ENCODE measurements at regions of chr2 and their contacts with region 1.

Region 1: GRCh38 chr2:131154071-131154531 is 49.0 kb downstream of the PLEKHB2 start:
- DNase-seq: peak; percentile 32 to 80 (median 63)
- ATAC-seq: peak; percentile 84
- H3K4me3 ChIP-seq: no peak overlapping the region
- H3K4me3 Mint-ChIP-seq: no peak overlapping the region
- H3K27ac ChIP-seq: no peak overlapping the region
- H3K27ac Mint-ChIP-seq: no peak overlapping the region
- H3K4me1 ChIP-seq: peaks cover 15% of the 10 kb centered on the region
- H3K4me1 Mint-ChIP-seq: peaks cover 19% of the 10 kb centered on the region
- H3K27me3 ChIP-seq: no peaks in the 10 kb centered on the region
- H3K27me3 Mint-ChIP-seq: no peaks in the 10 kb centered on the region
- CTCF ChIP-seq: peak; percentile 64

Region 2: GRCh38 chr2:131168538-131168937 is 14.4 kb after region 1 on chr2:
- CTCF ChIA-PET with region 1: no interaction called
- POLR2A ChIA-PET with region 1: no interaction called
- intact Hi-C with region 1: no loop called
- DNase-seq: no peak
- ATAC-seq: no peak
- H3K4me3 ChIP-seq: no peak overlapping the region
- H3K4me3 Mint-ChIP-seq: no peak overlapping the region
- H3K27ac ChIP-seq: no peak overlapping the region
- H3K27ac Mint-ChIP-seq: no peak overlapping the region
- H3K4me1 ChIP-seq: no peaks in the 10 kb centered on the region
- H3K4me1 Mint-ChIP-seq: no peaks in the 10 kb centered on the region
- H3K27me3 ChIP-seq: no peaks in the 10 kb centered on the region
- H3K27me3 Mint-ChIP-seq: peaks cover 8% of the 10 kb centered on the region
- CTCF ChIP-seq: no peak

Region 3: GRCh38 chr2:131413148-131413747 is 259.1 kb after region 1 on chr2:
- CTCF ChIA-PET with region 1: interaction called, 4 read pairs
- POLR2A ChIA-PET with region 1: no interaction called
- intact Hi-C with region 1: loop called (anchors 1 to 2 kb)
- DNase-seq: peak in 2 of 9 experiments; percentile 53 to 63
- ATAC-seq: no peak
- H3K4me3 ChIP-seq: no peak overlapping the region
- H3K4me3 Mint-ChIP-seq: no peak overlapping the region
- H3K27ac ChIP-seq: no peak overlapping the region
- H3K27ac Mint-ChIP-seq: no peak overlapping the region
- H3K4me1 ChIP-seq: no peaks in the 10 kb centered on the region
- H3K4me1 Mint-ChIP-seq: no peaks in the 10 kb centered on the region
- H3K27me3 ChIP-seq: no peaks in the 10 kb centered on the region
- H3K27me3 Mint-ChIP-seq: peaks cover 33% of the 10 kb centered on the region
- CTCF ChIP-seq: peak; percentile 94

Region 4: DNA sequence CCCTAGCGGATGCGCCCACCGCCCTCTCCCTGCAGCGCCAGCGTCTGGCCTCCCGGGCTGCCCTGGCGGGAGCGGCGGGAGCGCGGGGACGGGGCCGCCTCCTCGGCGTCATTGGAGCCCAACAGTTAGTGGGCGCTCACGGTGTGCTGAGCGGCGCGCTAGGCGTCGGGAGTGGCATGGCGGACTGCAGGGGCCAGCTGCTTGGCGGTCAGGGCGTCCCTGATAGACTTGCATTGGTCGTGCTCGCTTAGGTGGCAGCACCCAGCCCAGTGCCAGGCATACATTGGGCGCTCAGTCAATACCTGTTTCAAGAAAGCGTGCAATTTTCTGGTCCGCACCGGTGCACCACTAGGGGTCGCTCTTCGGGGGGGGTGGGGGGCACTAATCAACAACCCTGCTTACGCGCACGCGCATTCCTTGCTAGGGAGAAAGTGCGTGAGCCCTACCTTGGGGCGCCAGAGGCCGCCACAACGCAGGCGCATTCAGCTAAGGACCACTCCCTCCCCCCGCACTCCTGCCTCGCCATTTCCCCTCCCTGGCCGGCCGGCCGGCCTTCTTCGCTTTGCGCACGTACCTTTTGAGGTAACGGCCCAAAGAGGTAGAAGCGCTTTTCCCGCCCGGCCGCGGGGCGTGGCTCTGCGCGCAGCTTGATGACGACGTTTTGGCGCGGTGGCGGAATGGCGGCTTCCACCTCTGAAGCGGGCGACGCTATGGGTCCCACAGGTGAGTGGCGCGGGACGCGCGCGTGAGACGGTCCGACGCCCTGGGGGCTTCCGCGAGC is 338.5 kb after region 1 on chr2:
- CTCF ChIA-PET with region 1: no interaction called
- POLR2A ChIA-PET with region 1: no interaction called
- intact Hi-C with region 1: loop called in 1 of 2 experiments (anchors 10 kb)
- DNase-seq: peak; percentile 86 to 98 (median 93)
- ATAC-seq: peak; percentile 73
- H3K4me3 ChIP-seq: peak overlapping the region; percentile 86 to 87
- H3K4me3 Mint-ChIP-seq: peak overlapping the region; percentile 95
- H3K27ac ChIP-seq: peak overlapping the region; percentile 95 to 97
- H3K27ac Mint-ChIP-seq: peak overlapping the region; percentile 98
- H3K4me1 ChIP-seq: peaks cover 19% of the 10 kb centered on the region
- H3K4me1 Mint-ChIP-seq: peaks cover 49% of the 10 kb centered on the region
- H3K27me3 ChIP-seq: no peaks in the 10 kb centered on the region
- H3K27me3 Mint-ChIP-seq: no peaks in the 10 kb centered on the region
- CTCF ChIP-seq: peak; percentile 88

Region 5: GRCh38 chr2:131673392-131674173 is 519.5 kb after region 1 on chr2:
- CTCF ChIA-PET with region 1: interaction called, 15 read pairs
- POLR2A ChIA-PET with region 1: no interaction called
- intact Hi-C with region 1: loop called in 1 of 2 experiments (anchors 1 kb)
- DNase-seq: peak; percentile 28 to 75 (median 56)
- ATAC-seq: peak; percentile 54
- H3K4me3 ChIP-seq: peak overlapping the region; percentile 39 to 50
- H3K4me3 Mint-ChIP-seq: peak overlapping the region; percentile 67
- H3K27ac ChIP-seq: no peak overlapping the region
- H3K27ac Mint-ChIP-seq: no peak overlapping the region
- H3K4me1 ChIP-seq: peaks cover 14% of the 10 kb centered on the region
- H3K4me1 Mint-ChIP-seq: peaks cover 4% of the 10 kb centered on the region
- H3K27me3 ChIP-seq: peaks cover 0 to 5% of the 10 kb centered on the region in 2 experiments
- H3K27me3 Mint-ChIP-seq: peaks cover 33% of the 10 kb centered on the region
- CTCF ChIP-seq: peak; percentile 81

Region 6: DNA sequence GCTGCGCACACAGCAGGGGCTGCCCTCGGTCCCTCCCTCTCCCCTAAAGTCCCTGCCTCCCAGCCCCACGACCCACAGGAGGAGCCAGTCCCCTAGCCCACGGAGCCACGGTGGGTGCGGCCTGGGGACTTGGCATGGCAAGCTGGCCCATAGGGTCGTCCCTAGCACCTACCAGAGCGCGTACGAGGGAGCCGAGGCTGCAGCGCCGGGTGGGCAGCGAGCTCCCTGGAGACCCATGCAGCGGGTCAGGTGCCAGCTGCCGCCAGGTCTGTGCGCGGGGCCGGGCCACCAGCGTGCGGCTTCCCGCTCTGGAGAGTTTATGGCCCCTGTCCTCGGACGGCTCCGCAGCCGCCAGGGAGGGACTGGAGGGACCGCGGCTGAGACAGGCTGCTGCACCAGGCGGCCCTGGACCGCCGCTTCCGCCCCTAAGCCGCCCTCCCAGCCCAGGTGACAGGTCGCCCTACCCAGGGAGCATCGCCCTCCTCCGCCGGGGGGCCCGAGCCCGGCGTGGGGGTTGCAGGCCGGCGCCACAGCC is 647.2 kb after region 1 on chr2:
- CTCF ChIA-PET with region 1: interaction called, 3 read pairs
- POLR2A ChIA-PET with region 1: no interaction called
- intact Hi-C with region 1: loop called in 1 of 2 experiments (anchors 5 kb)
- DNase-seq: peak in 2 of 9 experiments; percentile 12 to 14
- ATAC-seq: no peak
- H3K4me3 ChIP-seq: no peak overlapping the region
- H3K4me3 Mint-ChIP-seq: peak overlapping the region; percentile 5
- H3K27ac ChIP-seq: no peak overlapping the region
- H3K27ac Mint-ChIP-seq: no peak overlapping the region
- H3K4me1 ChIP-seq: no peaks in the 10 kb centered on the region
- H3K4me1 Mint-ChIP-seq: peaks cover 3% of the 10 kb centered on the region
- H3K27me3 ChIP-seq: peaks cover 0 to 3% of the 10 kb centered on the region in 2 experiments
- H3K27me3 Mint-ChIP-seq: peaks cover 8% of the 10 kb centered on the region
- CTCF ChIP-seq: no peak